ENCODE measurements at regions of chr12 and their contacts with region 1.

Region 1: DNA sequence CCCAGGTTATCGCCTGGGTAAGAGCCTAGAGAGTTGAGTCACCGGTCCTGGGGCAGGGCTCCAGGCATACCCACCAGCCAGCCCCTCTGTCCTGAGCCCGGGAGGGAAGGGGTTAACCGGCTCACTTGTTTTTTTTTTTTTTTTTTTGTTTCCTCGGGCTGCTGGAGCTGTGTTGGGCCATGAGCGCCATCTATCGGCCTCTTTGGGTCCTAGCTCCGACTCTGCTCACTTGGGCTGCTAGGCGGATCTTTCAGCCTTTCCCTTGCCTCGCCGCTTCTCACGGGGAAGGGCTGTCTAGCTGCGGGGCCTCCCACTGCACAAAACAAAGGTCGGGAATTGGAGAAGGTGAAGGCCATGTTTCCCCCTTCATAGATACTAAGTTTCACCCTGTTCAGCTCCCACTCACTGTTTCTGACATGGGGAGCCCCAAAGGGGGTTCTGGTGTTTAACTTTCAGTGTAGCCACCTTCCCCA is 2.8 kb upstream of the SMUG1 start:
- DNase-seq: peak; percentile 66 to 93 (median 74)
- ATAC-seq: peak; percentile 74
- H3K4me3 ChIP-seq: no peak overlapping the region
- H3K4me3 Mint-ChIP-seq: peak overlapping the region; percentile 5
- H3K27ac ChIP-seq: no peak overlapping the region
- H3K27ac Mint-ChIP-seq: no peak overlapping the region
- H3K4me1 ChIP-seq: peaks cover 31% of the 10 kb centered on the region
- H3K4me1 Mint-ChIP-seq: peaks cover 22% of the 10 kb centered on the region
- H3K27me3 ChIP-seq: peaks cover 30 to 34% of the 10 kb centered on the region in 2 experiments
- H3K27me3 Mint-ChIP-seq: peaks cover 54% of the 10 kb centered on the region
- CTCF ChIP-seq: peak; percentile 76

Region 2: GRCh38 chr12:53675651-53676453 is 515.7 kb before region 1 on chr12 and contains the start of gene ATP5MC2:
- CTCF ChIA-PET with region 1: no interaction called
- POLR2A ChIA-PET with region 1: no interaction called
- intact Hi-C with region 1: loop called in 1 of 2 experiments (anchors 2 kb)
- DNase-seq: peak; percentile 95 to 100 (median 96)
- ATAC-seq: peak; percentile 92
- H3K4me3 ChIP-seq: peak within 1 kb of the TSS; percentile 78
- H3K4me3 Mint-ChIP-seq: peak within 1 kb of the TSS; percentile 93
- H3K27ac ChIP-seq: peak within 1 kb of the TSS; percentile 58 to 66
- H3K27ac Mint-ChIP-seq: peak within 1 kb of the TSS; percentile 90
- H3K4me1 ChIP-seq: peaks cover 31% of the 10 kb centered on the region
- H3K4me1 Mint-ChIP-seq: peaks cover 32% of the 10 kb centered on the region
- H3K27me3 ChIP-seq: peaks cover 10 to 18% of the 10 kb centered on the region in 2 experiments
- H3K27me3 Mint-ChIP-seq: peaks cover 17% of the 10 kb centered on the region
- CTCF ChIP-seq: peak; percentile 99
- total RNA-seq, gene ATP5MC2: 235 to 245 TPM

Region 3: DNA sequence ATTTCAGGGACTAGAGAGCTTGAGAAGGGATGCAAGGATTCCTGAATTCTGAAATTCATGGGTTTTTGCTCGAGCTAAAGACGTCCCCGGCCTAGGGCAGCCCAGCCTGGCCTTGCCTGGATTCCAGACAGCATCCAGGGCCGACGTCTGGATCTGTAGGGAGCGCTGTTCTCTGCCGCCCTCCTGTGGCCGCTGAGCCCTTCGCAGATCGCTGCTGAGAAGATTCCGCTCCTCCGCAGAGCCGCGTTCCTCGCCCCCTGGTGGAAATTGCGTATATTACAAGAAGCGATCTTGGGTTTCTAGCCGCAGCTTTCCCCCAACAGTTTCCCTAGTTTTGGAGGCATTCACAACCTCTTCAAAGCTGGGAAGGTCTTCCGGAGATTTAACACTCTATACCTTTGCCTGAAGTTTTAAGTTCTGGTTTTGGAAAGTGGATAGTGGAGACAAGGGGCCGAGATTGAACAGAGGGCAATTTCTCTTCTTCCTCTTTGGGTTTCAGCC is 444.9 kb before region 1 on chr12:
- CTCF ChIA-PET with region 1: interaction called, 3 read pairs
- POLR2A ChIA-PET with region 1: no interaction called
- intact Hi-C with region 1: loop called in 1 of 2 experiments (anchors 5 kb)
- DNase-seq: peak; percentile 80 to 94 (median 84)
- ATAC-seq: peak; percentile 85
- H3K4me3 ChIP-seq: no peak overlapping the region
- H3K4me3 Mint-ChIP-seq: peak overlapping the region; percentile 57
- H3K27ac ChIP-seq: no peak overlapping the region
- H3K27ac Mint-ChIP-seq: no peak overlapping the region
- H3K4me1 ChIP-seq: peaks cover 41% of the 10 kb centered on the region
- H3K4me1 Mint-ChIP-seq: peaks cover 5% of the 10 kb centered on the region
- H3K27me3 ChIP-seq: peaks cover 55 to 65% of the 10 kb centered on the region in 2 experiments
- H3K27me3 Mint-ChIP-seq: no peaks in the 10 kb centered on the region
- CTCF ChIP-seq: peak; percentile 100

Region 4: DNA sequence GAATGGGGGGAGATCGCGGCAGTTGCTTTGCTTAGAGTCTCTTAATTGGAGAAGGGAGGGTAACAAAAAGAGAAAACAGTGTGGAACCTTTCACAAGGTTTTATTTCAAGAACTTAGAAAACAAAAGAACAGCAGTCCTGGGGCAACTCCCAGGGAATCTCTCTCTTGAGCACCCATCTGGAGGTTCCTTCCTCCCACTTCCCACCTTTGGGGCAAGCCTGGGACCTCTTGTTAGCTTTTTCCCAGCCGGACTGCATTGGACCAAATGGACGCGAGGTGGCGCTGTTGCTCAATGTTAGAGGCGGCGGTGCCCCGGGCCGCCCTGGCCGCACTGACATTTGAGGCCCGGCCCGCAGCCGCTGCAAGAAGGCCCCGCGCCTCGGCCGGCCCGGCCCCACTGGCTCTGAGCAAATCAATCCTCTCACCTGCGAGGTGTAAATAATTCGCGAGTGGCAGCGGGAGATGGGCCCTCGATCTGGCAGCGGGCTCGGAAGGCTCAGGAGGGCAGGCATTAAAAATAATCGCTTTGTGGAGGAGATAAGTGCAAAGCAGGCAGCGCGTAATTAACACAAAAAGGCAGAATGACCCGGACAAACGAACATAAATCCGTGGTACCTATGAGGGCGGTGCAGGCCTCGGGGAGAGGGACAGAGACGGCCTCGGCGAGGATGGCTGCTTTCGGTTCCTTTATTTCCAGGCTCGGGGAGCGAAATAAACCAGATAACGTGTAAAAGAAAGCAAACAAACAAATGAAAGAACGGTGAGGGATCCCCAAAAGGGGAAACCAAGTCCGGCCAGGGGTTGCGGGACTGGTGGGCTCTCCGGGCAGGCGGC is 185.5 kb before region 1 on chr12:
- CTCF ChIA-PET with region 1: interaction called, 10 read pairs
- POLR2A ChIA-PET with region 1: interaction called, 4 read pairs
- intact Hi-C with region 1: loop called (anchors 1 kb)
- DNase-seq: peak; percentile 68 to 91 (median 81)
- ATAC-seq: peak; percentile 80
- H3K4me3 ChIP-seq: peak overlapping the region; percentile 50
- H3K4me3 Mint-ChIP-seq: peak overlapping the region; percentile 84
- H3K27ac ChIP-seq: no peak overlapping the region
- H3K27ac Mint-ChIP-seq: no peak overlapping the region
- H3K4me1 ChIP-seq: peaks cover 41% of the 10 kb centered on the region
- H3K4me1 Mint-ChIP-seq: peaks cover 38% of the 10 kb centered on the region
- H3K27me3 ChIP-seq: peaks cover 93 to 96% of the 10 kb centered on the region in 2 experiments
- H3K27me3 Mint-ChIP-seq: peaks cover 100% of the 10 kb centered on the region
- CTCF ChIP-seq: peak; percentile 93

Region 5: GRCh38 chr12:54207484-54208294 is 16.1 kb after region 1 on chr12:
- CTCF ChIA-PET with region 1: interaction called, 23 read pairs
- POLR2A ChIA-PET with region 1: no interaction called
- intact Hi-C with region 1: no loop called
- DNase-seq: peak; percentile 59 to 84 (median 72)
- ATAC-seq: peak; percentile 96
- H3K4me3 ChIP-seq: no peak overlapping the region
- H3K4me3 Mint-ChIP-seq: no peak overlapping the region
- H3K27ac ChIP-seq: no peak overlapping the region
- H3K27ac Mint-ChIP-seq: no peak overlapping the region
- H3K4me1 ChIP-seq: peaks cover 7% of the 10 kb centered on the region
- H3K4me1 Mint-ChIP-seq: no peaks in the 10 kb centered on the region
- H3K27me3 ChIP-seq: peaks cover 13 to 31% of the 10 kb centered on the region in 2 experiments
- H3K27me3 Mint-ChIP-seq: peaks cover 53% of the 10 kb centered on the region
- CTCF ChIP-seq: peak; percentile 92

Region 6: GRCh38 chr12:54240971-54241588 is 49.5 kb after region 1 on chr12:
- CTCF ChIA-PET with region 1: no interaction called
- POLR2A ChIA-PET with region 1: no interaction called
- intact Hi-C with region 1: no loop called
- DNase-seq: no peak
- ATAC-seq: no peak
- H3K4me3 ChIP-seq: no peak overlapping the region
- H3K4me3 Mint-ChIP-seq: no peak overlapping the region
- H3K27ac ChIP-seq: no peak overlapping the region
- H3K27ac Mint-ChIP-seq: peak overlapping the region; percentile 51
- H3K4me1 ChIP-seq: no peaks in the 10 kb centered on the region
- H3K4me1 Mint-ChIP-seq: no peaks in the 10 kb centered on the region
- H3K27me3 ChIP-seq: no peaks in the 10 kb centered on the region
- H3K27me3 Mint-ChIP-seq: no peaks in the 10 kb centered on the region
- CTCF ChIP-seq: no peak